H1 (cell line): ENCODE measurements at regions of chr2 and their contacts with region 1.

Region 1: DNA sequence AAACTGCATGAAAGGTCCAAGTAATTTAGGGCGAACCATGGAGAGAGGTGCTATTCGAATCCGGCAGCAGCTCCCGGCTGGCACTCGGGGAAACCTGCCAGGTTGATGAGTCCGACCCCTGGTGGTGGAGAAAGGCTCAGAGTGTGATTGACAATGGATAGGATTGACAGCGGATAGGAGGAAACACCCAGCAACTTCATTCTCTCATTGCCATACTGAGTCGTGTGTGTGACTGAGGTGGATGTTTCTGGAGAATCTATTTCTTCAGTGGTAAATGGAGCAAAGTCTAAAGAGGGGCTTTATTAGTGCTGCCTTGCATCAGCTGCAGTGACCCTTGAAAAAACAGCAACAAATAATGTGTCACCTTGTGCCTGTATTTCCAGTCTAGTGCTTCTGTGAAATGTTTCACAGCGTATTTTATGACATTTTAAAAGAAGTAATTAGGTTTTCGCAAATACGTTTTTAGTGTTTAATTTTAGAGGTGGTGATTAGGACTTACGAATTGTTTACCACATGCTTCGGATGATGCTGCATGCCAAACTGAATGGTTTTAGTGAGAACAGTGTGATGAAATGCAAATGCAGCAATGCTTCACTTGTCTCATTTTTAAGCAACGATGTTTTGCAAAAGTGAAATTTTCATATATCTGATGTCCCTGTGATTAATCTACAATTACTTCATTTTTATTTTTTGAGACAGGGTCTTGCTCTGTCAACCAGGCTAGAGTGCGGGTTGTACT is 102.0 kb downstream of the DCDC2C start:
- DNase-seq: peak in 1 of 2 experiments; percentile 83
- H3K4me3 ChIP-seq: no peak overlapping the region
- H3K27ac ChIP-seq: no peak overlapping the region
- H3K4me1 ChIP-seq: no peaks in the 10 kb centered on the region
- H3K27me3 ChIP-seq: no peaks in the 10 kb centered on the region
- CTCF ChIP-seq: peak; percentile 76 to 87 (median 82)
- EP300 ChIP-seq: no peak
- POLR2A ChIP-seq: no peak
- RAD21 ChIP-seq: peak; percentile 70 to 73

Region 2: DNA sequence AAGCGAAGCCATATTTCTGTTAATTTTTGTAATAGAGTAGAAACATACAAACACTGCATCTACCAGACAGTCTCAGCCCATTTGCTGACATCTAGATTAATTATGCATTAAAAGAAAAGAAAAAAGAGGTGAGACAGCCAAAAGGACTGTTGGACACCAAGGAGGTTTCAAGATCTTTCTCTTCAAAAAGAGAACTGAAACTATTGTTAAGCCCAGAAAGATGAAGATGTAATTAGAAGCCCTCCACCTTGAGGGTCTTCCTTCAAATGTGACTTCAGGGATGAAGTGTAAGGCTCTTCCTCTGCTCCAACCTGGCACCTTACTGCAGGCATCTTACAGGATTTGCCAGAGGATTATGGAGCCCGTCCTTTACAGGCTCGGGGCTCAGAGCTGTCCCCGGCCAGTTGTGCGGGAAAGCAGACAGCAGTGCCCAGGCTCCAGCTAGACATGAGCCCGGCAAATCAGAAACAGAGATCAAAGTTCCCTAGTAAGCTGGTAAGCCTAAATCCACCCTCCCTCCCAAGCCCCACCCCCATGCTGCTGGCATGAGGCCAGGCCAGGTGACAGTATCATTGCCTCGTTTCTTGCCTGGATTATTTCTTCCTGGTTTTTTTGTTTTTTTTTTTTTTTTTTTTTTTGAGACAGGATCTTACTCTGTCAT is 324.9 kb before region 1 on chr2:
- CTCF ChIA-PET with region 1: no interaction called
- POLR2A ChIA-PET with region 1: no interaction called
- DNase-seq: no peak
- H3K4me3 ChIP-seq: no peak overlapping the region
- H3K27ac ChIP-seq: no peak overlapping the region
- H3K4me1 ChIP-seq: no peaks in the 10 kb centered on the region; a peak in 1 of 7 replicates
- H3K27me3 ChIP-seq: no peaks in the 10 kb centered on the region
- CTCF ChIP-seq: no peak
- EP300 ChIP-seq: no peak
- POLR2A ChIP-seq: no peak
- RAD21 ChIP-seq: no peak

Region 3: DNA sequence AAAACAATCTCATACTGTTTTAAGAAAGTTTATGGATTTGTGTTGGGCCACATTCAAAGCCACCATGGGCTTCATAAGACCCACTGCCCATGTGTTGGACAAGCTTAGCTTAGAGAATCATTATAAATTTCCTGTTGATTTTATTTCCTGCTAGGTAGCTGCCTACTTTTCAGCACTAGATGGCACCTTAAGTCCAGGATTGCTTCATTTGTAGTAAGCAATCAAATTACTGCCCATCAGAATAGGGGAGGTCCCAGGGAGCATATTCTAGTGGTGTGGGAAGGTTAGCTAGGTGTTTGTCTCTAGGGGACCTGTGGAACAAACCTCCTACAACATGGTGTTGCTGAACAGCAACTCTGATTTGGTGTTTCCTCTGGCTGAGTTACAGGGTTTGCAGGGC is 113.0 kb before region 1 on chr2:
- CTCF ChIA-PET with region 1: interaction called, 23 read pairs
- POLR2A ChIA-PET with region 1: no interaction called
- DNase-seq: peak in 1 of 2 experiments; percentile 48
- H3K4me3 ChIP-seq: no peak overlapping the region
- H3K27ac ChIP-seq: no peak overlapping the region
- H3K4me1 ChIP-seq: no peaks in the 10 kb centered on the region
- H3K27me3 ChIP-seq: no peaks in the 10 kb centered on the region; a peak in 1 of 7 replicates
- CTCF ChIP-seq: peak in 2 of 3 experiments; percentile 67 to 75; a peak in 3 of 4 replicates
- EP300 ChIP-seq: no peak
- POLR2A ChIP-seq: no peak
- RAD21 ChIP-seq: peak; percentile 94

Region 4: GRCh38 chr2:3738454-3738853 is 66.9 kb before region 1 on chr2:
- CTCF ChIA-PET with region 1: interaction called, 46 read pairs
- POLR2A ChIA-PET with region 1: no interaction called
- DNase-seq: no peak
- H3K4me3 ChIP-seq: no peak overlapping the region
- H3K27ac ChIP-seq: no peak overlapping the region
- H3K4me1 ChIP-seq: no peaks in the 10 kb centered on the region
- H3K27me3 ChIP-seq: no peaks in the 10 kb centered on the region; a peak in 1 of 7 replicates
- CTCF ChIP-seq: peak; percentile 24 to 76 (median 51)
- EP300 ChIP-seq: no peak
- POLR2A ChIP-seq: no peak
- RAD21 ChIP-seq: peak; percentile 78 to 79

Region 5: DNA sequence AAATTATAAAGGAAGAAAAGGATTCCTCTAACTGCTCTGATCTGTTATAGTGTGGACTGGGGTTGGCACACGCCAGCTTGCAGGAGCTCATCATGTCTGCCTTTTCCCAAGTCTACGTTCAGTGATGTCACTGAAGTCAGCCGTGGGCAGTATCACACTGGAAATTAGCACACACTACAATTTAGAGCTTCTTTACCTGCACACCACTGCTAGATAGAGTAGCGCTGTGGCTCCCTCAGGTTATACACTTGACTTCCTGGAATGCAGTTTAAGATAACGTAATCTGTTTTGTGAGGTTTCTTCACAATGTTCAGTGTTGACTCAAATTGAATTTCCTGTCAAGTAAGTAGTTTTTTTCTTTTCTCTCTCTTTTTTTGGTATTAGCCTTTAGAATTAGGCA is 385.2 kb after region 1 on chr2:
- CTCF ChIA-PET with region 1: no interaction called
- POLR2A ChIA-PET with region 1: no interaction called
- DNase-seq: no peak
- H3K4me3 ChIP-seq: no peak overlapping the region
- H3K27ac ChIP-seq: no peak overlapping the region
- H3K4me1 ChIP-seq: no peaks in the 10 kb centered on the region
- H3K27me3 ChIP-seq: no peaks in the 10 kb centered on the region
- CTCF ChIP-seq: no peak
- EP300 ChIP-seq: no peak
- POLR2A ChIP-seq: no peak
- RAD21 ChIP-seq: no peak